ENCODE measurements at regions of chrX and their contacts with region 1.

Region 1: GRCh38 chrX:24241822-24242648 is 71.8 kb downstream of the SUPT20HL2 start:
- DNase-seq: no peak
- ATAC-seq: peak; percentile 47

Region 2: DNA sequence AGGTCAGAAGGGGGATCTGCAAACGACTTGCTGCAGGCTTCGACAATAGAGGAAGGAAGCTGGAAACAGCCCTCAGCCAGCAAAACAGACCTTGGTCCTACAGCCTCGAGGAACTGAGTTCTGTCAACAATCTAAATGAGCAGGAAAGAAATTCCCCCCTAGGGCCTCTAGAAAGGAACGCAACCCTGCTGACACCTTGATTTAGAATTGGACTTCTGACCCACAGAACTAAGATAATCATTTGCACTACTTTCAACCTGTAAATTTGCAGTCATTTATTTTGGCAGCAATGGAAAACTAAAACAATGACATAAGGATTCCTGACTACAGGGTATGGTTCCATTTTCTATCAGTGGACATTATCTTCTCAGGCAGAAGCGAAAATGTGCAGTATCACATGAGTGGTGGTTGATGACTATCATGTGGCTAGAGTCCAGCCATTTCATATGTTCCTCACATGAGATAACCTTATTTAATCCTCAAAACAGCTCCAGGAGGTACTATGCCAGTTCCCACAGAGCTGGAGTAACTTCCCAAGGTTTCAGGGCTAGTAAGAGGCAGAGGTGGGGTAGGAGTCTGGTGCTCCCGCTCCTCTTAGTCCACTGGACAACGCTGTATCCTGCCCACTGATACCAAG is 397.4 kb before region 1 on chrX:
- intact Hi-C with region 1: no loop called
- DNase-seq: no peak
- ATAC-seq: no peak

Region 3: DNA sequence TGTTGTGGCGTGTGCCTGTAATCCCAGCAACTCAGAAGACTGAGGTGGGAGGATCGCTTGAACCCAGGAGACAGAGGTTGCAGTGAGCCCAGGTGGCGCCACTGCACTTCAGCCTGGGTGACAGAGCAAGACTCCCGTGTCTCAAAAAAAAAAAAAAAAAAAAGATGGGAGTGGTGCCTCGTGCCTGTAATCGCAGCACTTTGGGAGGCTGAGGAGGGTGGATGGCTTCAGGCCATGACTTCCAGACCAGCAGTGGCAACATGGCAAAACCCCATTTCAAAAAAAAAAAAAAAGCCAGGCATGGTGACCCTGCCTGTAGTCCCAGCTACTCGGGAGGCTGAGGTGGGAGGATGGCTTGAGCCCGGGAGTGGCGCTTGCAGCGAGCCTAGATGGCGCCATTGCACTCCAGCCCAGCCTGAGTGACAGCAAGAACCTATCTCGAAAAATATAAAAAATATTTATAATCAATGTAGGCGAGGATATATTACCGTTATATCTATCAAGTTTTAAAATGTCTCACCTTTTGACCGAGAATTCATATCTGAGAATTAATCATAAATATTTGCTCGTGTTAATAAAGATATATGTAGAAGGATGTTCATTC is 160.3 kb before region 1 on chrX:
- intact Hi-C with region 1: loop called (anchors 5 kb)
- DNase-seq: peak; percentile 72
- ATAC-seq: peak; percentile 54